ENCODE measurements at regions of chr14 and their contacts with region 1.

Region 1: GRCh38 chr14:75709207-75709812 is 48.3 kb downstream of the TTLL5 start:
- DNase-seq: peak; percentile 44
- H3K4me3 ChIP-seq: no peak overlapping the region
- CTCF ChIP-seq: peak; percentile 79

Region 2: DNA sequence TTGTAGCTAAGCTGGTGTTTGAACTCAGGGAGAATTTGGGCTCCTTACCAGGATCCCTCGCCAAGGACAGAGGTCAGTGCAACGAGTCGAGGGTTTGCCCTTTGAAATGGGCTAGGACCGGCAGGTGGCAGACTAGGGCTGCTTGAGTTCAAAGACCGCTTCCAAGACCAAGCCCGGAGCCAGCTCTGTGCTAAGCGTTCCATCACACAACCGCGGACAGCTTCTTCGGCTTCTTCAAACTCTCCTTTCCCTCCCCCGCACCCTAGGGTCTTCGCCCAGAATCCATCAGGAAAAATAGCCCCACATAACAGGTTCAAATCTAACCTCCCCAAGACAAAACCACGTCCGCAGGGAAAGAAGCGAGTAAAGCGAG is 131.6 kb before region 1 on chr14:
- CTCF ChIA-PET with region 1: interaction called, 50 read pairs
- POLR2A ChIA-PET with region 1: no interaction called
- DNase-seq: no peak
- H3K4me3 ChIP-seq: peak overlapping the region; percentile 59
- CTCF ChIP-seq: peak; percentile 85

Region 3: GRCh38 chr14:75720842-75721498 is 11.7 kb after region 1 on chr14:
- CTCF ChIA-PET with region 1: interaction called, 40 read pairs
- POLR2A ChIA-PET with region 1: no interaction called
- DNase-seq: no peak
- H3K4me3 ChIP-seq: no peak overlapping the region
- CTCF ChIP-seq: no peak

Region 4: GRCh38 chr14:75794615-75795038 is 85.3 kb after region 1 on chr14:
- CTCF ChIA-PET with region 1: interaction called, 111 read pairs
- POLR2A ChIA-PET with region 1: no interaction called
- DNase-seq: peak; percentile 21
- H3K4me3 ChIP-seq: no peak overlapping the region
- CTCF ChIP-seq: peak; percentile 50

Region 5: GRCh38 chr14:75906676-75907280 is 197.5 kb after region 1 on chr14:
- CTCF ChIA-PET with region 1: interaction called, 67 read pairs
- POLR2A ChIA-PET with region 1: no interaction called
- DNase-seq: no peak
- H3K4me3 ChIP-seq: no peak overlapping the region
- CTCF ChIP-seq: peak; percentile 68

Region 6: DNA sequence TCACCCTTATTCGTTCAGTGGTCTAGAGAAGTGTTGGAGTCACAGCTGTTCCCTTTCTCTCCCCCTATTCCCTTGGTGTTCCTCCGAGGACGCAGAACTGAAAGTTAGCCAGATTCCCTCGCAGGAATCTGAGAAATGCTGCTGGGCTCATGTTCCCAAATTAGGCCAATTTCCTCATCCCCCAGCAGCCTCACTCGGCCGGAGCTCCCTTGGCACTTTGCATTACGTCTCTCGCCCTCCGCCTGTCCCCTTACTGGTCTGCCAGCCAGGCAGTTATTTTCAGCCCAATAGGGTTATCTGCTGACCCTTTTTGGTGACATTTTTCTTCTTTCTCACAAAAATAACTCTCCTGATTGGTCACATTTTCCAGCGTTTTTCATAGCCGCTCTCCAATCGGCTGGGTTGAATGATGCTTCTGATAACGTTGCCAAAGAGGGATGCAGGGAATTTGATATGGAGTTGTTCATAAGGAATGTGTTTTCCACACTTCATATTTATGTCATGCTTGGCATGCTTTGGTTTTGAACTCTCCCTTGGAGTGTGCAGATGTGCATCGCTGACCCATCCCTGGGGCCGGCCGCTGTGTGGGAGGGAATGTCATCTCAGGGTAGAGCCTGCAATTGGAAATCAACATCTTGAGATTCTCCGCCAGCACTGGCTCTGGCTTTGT is 286.2 kb after region 1 on chr14:
- CTCF ChIA-PET with region 1: interaction called, 715 read pairs
- POLR2A ChIA-PET with region 1: no interaction called
- DNase-seq: no peak
- H3K4me3 ChIP-seq: no peak overlapping the region
- CTCF ChIP-seq: no peak

Region 7: GRCh38 chr14:76352639-76353281 is 643.5 kb after region 1 on chr14:
- CTCF ChIA-PET with region 1: interaction called, 76 read pairs
- POLR2A ChIA-PET with region 1: no interaction called
- DNase-seq: no peak
- H3K4me3 ChIP-seq: peak overlapping the region; percentile 38
- CTCF ChIP-seq: peak; percentile 94